ENCODE measurements at regions of chr2 and their contacts with region 1.

Region 1: GRCh38 chr2:5365871-5366461 is 326.2 kb upstream of the SOX11 start:
- DNase-seq: peak; percentile 90
- H3K4me3 ChIP-seq: no peak overlapping the region
- H3K27ac ChIP-seq: no peak overlapping the region
- H3K4me1 ChIP-seq: peaks cover 0 to 6% (median 2%) of the 10 kb centered on the region in 4 donors
- H3K27me3 ChIP-seq: no peaks in the 10 kb centered on the region
- CTCF ChIP-seq: peak; percentile 62 to 87 (median 81)
- EP300 ChIP-seq: no peak
- POLR2A ChIP-seq: no peak

Region 2: DNA sequence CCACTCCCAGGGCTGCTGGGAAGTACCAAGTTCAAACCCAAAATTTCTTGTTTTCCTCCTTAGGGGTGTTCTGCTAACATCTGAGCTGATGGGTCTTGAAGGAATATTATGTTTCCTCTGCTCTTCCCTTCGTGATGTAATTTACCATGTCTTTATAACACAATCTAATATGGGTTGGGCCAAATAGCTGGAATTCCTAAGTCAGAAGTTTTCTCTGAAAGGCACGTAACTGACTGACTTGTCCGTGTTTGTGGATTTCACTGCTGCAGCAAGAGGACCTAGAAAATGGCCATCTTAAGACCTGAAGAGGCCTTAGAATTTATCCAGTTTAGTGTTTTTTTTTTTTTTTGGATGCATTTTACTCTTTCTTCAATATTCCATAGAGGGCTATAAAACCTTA is 1405.9 kb before region 1 on chr2:
- intact Hi-C with region 1: loop called (anchors 5 kb)
- DNase-seq: no peak
- H3K4me3 ChIP-seq: no peak overlapping the region
- H3K27ac ChIP-seq: no peak overlapping the region
- H3K4me1 ChIP-seq: no peaks in the 10 kb centered on the region
- H3K27me3 ChIP-seq: peaks cover 0 to 23% (median 0%) of the 10 kb centered on the region in 4 donors
- CTCF ChIP-seq: no peak
- EP300 ChIP-seq: no peak
- POLR2A ChIP-seq: no peak

Region 3: GRCh38 chr2:4992226-4992625 is 373.7 kb before region 1 on chr2:
- intact Hi-C with region 1: loop called (anchors 5 kb)
- DNase-seq: no peak
- H3K4me3 ChIP-seq: no peak overlapping the region
- H3K27ac ChIP-seq: no peak overlapping the region
- H3K4me1 ChIP-seq: no peaks in the 10 kb centered on the region
- H3K27me3 ChIP-seq: no peaks in the 10 kb centered on the region
- CTCF ChIP-seq: peak; percentile 19 to 47 (median 21)
- EP300 ChIP-seq: no peak
- POLR2A ChIP-seq: no peak

Region 4: GRCh38 chr2:5409898-5410381 is 44.0 kb after region 1 on chr2:
- intact Hi-C with region 1: no loop called
- DNase-seq: no peak
- H3K4me3 ChIP-seq: no peak overlapping the region
- H3K27ac ChIP-seq: no peak overlapping the region
- H3K4me1 ChIP-seq: no peaks in the 10 kb centered on the region
- H3K27me3 ChIP-seq: no peaks in the 10 kb centered on the region
- CTCF ChIP-seq: no peak
- EP300 ChIP-seq: no peak
- POLR2A ChIP-seq: no peak

Region 5: DNA sequence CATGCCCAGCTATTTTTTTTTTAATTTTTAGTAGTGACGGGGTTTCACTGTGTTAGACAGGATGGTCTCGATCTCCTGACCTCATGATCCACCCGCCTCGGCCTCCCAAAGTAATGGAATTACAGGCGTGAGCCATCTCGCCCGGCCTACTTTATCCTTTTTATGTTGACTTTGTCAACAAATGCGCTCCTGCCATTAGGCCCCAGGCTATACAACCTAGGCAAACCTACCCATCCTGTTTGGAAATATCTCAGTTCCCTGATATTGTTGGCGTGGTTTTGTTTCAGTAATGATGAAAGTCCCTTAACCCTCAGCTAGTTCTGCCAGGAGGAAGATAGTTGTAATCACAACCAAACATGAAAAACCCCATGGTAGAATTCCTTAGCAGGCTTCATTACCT is 76.8 kb after region 1 on chr2:
- intact Hi-C with region 1: no loop called
- DNase-seq: no peak
- H3K4me3 ChIP-seq: no peak overlapping the region
- H3K27ac ChIP-seq: no peak overlapping the region
- H3K4me1 ChIP-seq: no peaks in the 10 kb centered on the region
- H3K27me3 ChIP-seq: peaks cover 0 to 4% (median 0%) of the 10 kb centered on the region in 4 donors
- CTCF ChIP-seq: no peak
- EP300 ChIP-seq: no peak
- POLR2A ChIP-seq: no peak